ENCODE measurements at regions of chr6 and their contacts with region 1.

Region 1: GRCh38 chr6:53366128-53366641 is 17.4 kb upstream of the ELOVL5 start:
- DNase-seq: no peak
- H3K4me3 ChIP-seq: no peak overlapping the region
- H3K27ac ChIP-seq: no peak overlapping the region
- H3K27me3 ChIP-seq: peaks cover 4% of the 10 kb centered on the region
- CTCF ChIP-seq: no peak

Region 2: GRCh38 chr6:53203483-53203882 is 162.7 kb before region 1 on chr6:
- CTCF ChIA-PET with region 1: no interaction called
- POLR2A ChIA-PET with region 1: interaction called, 12 read pairs
- DNase-seq: no peak
- H3K4me3 ChIP-seq: no peak overlapping the region
- H3K27ac ChIP-seq: no peak overlapping the region
- H3K27me3 ChIP-seq: no peaks in the 10 kb centered on the region
- CTCF ChIP-seq: no peak

Region 3: DNA sequence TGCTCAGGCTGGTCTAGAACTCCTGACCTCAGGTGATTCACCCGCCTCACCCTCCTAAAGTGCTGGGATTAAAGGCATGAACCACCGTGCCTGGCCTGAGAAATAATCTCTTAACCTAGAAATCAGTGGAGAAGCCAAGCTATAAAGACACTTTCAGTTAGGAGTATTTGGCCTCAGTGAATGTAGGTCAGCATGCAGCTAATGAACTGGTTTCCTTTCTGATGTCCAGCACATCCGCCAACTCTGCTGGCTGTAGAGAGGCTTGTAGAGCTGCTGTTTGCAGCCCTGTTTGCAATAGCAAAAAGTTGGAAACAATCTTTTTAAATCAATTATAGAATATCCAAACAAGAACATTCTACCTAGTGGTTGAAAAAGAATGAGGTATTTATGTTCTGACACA is 25.0 kb after region 1 on chr6:
- CTCF ChIA-PET with region 1: no interaction called
- POLR2A ChIA-PET with region 1: no interaction called
- DNase-seq: no peak
- H3K4me3 ChIP-seq: no peak overlapping the region
- H3K27ac ChIP-seq: no peak overlapping the region
- H3K27me3 ChIP-seq: peaks cover 4% of the 10 kb centered on the region
- CTCF ChIP-seq: no peak